ENCODE measurements at regions of chr3 and their contacts with region 1.

Region 1: GRCh38 chr3:107574650-107575049 is 51.9 kb downstream of the BBX start:
- DNase-seq: peak; percentile 62
- ATAC-seq: peak; percentile 76
- H3K4me3 ChIP-seq: no peak overlapping the region
- H3K27ac ChIP-seq: no peak overlapping the region
- H3K4me1 ChIP-seq: no peaks in the 10 kb centered on the region
- H3K27me3 ChIP-seq: no peaks in the 10 kb centered on the region
- CTCF ChIP-seq: peak; percentile 75

Region 2: GRCh38 chr3:107676469-107677309 is 102.0 kb after region 1 on chr3:
- CTCF ChIA-PET with region 1: no interaction called
- POLR2A ChIA-PET with region 1: no interaction called
- intact Hi-C with region 1: loop called (anchors 10 kb)
- DNase-seq: peak; percentile 72
- ATAC-seq: peak; percentile 68
- H3K4me3 ChIP-seq: no peak overlapping the region
- H3K27ac ChIP-seq: no peak overlapping the region
- H3K4me1 ChIP-seq: no peaks in the 10 kb centered on the region
- H3K27me3 ChIP-seq: no peaks in the 10 kb centered on the region
- CTCF ChIP-seq: peak; percentile 76

Measured in PC-3 (cell line).